ENCODE measurements at regions of chr15 and their contacts with region 1.

Region 1: GRCh38 chr15:53225781-53226180 is 435.6 kb upstream of the ONECUT1 start:
- DNase-seq: no peak
- H3K4me3 ChIP-seq: no peak overlapping the region
- H3K27ac ChIP-seq: no peak overlapping the region
- H3K4me1 ChIP-seq: no peaks in the 10 kb centered on the region
- H3K27me3 ChIP-seq: no peaks in the 10 kb centered on the region
- CTCF ChIP-seq: no peak
- POLR2A ChIP-seq: no peak

Region 2: DNA sequence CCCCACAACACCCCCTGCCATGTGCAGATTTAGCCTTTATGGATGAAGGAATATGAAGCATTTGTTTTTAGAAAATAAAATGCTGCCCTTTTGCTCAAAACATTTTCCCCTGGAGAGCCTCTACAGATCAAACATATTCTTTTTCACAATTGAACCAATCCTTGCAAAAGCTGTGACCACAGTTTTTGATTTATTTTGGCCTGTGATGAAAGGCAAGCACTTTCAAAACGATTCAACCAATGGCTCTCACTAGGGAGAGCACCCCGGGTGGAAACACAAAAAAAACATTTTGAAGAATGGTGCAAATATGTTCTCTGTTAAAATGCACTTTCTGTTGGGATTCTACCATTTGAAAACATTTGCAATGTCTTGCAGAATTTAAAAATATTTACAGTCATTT is 40.4 kb after region 1 on chr15:
- intact Hi-C with region 1: loop called (anchors 2 kb)
- DNase-seq: no peak
- H3K4me3 ChIP-seq: no peak overlapping the region
- H3K27ac ChIP-seq: no peak overlapping the region
- H3K4me1 ChIP-seq: no peaks in the 10 kb centered on the region
- H3K27me3 ChIP-seq: no peaks in the 10 kb centered on the region
- CTCF ChIP-seq: no peak
- POLR2A ChIP-seq: no peak